Transverse colon (tissue), 4 donors: ENCODE measurements at regions of chr2 and their contacts with region 1.

Region 1: GRCh38 chr2:60581433-60582282 is 28.2 kb upstream of the BCL11A start:
- DNase-seq: peak; percentile 67
- H3K4me3 ChIP-seq: peak overlapping the region in 3 of 4 donors; percentile 24 to 47 (median 26)
- H3K27ac ChIP-seq: no peak overlapping the region
- H3K4me1 ChIP-seq: peaks cover 0 to 5% (median 0%) of the 10 kb centered on the region in 4 donors
- H3K27me3 ChIP-seq: peaks cover 20% of the 10 kb centered on the region
- CTCF ChIP-seq: peak; percentile 69 to 96 (median 90)
- EP300 ChIP-seq: no peak
- POLR2A ChIP-seq: no peak

Region 2: DNA sequence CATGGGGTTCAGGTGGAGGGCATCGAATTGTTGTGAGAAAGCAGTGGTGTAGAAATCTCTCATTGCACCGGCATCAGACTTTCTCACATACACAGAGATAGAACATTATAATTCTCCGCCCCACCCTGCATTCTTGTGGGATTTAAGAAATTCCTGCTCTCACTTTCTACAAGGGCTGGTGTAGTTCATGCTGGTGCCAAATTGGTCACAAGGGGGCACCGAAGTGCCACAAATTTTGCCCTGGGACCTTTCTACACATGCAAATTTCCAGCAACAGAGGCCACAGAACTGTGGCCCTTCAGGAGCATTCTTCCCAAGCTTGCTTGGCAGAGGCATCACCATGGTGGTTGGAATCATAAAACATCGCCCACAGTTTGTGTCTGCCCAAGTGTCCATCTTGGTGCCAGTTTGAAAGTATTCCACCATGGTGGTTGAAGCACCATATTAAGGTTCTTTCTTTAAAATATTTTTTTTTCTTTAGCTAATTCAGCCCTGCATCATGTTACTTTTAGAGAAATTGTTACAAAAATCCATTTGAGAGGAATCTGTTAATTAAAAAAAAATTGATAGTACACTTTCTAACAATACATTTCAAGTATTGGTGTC is 1819.4 kb before region 1 on chr2:
- in situ Hi-C with region 1: loop called in 2 of 4 experiments (anchors 25 kb)
- intact Hi-C with region 1: loop called (anchors 10 kb)
- DNase-seq: peak; percentile 35
- H3K4me3 ChIP-seq: no peak overlapping the region
- H3K27ac ChIP-seq: no peak overlapping the region
- H3K4me1 ChIP-seq: no peaks in the 10 kb centered on the region
- H3K27me3 ChIP-seq: no peaks in the 10 kb centered on the region
- CTCF ChIP-seq: peak in 4 of 5 experiments; percentile 22 to 43 (median 40)
- EP300 ChIP-seq: no peak
- POLR2A ChIP-seq: no peak

Region 3: DNA sequence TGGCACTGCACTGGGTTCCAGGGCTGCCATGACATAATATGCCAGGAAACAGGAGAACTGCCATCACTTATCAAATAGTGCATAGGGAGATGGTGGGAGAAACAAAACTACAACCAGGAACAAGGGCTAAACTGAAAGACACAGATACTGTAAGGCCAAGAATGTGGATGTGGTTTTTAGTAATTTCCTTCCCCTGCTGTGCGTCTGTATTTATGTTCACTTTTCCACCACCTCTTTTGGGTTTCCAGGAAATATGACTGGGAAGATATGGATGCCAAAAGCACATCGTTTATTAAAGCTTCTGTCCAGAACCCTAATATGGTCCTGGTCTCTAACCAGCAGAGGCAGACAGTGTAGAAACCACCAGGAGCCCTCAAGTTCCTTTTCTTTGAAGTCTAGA is 1580.9 kb before region 1 on chr2:
- in situ Hi-C with region 1: loop called in 1 of 4 experiments (anchors 25 kb)
- intact Hi-C with region 1: no loop called
- DNase-seq: no peak
- H3K4me3 ChIP-seq: no peak overlapping the region
- H3K27ac ChIP-seq: no peak overlapping the region
- H3K4me1 ChIP-seq: no peaks in the 10 kb centered on the region
- H3K27me3 ChIP-seq: no peaks in the 10 kb centered on the region
- CTCF ChIP-seq: no peak
- EP300 ChIP-seq: no peak
- POLR2A ChIP-seq: no peak

Region 4: DNA sequence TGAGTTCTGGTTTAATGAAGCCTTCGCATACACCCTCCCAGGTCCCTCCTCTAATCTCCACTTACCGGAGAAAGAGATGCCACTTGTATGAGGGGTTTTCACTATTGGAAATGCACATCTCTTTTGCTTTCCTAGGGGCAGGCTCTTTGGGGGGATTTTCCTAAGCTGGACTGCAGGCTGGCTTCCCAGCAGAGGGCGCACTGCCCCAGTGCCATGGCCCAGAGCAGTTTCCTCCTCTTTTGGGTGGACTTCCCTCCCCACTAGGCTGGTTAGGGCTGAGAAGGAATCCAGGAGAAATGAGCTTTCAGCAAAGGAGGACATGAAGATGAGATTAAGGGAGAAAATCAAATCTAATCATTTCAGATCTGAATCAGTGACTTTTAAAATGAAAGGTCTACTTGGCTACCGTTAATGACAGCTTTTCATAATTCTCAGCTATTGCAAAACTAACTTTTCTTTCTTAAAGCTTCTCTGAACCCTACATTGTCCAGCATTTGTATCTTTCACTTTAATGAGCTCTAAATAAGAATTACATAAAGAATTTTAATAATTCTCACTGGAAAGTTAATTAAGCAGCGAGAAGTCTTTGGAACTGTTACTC is 1556.4 kb before region 1 on chr2:
- in situ Hi-C with region 1: loop called in 2 of 4 experiments (anchors 25 kb)
- intact Hi-C with region 1: no loop called
- DNase-seq: peak; percentile 16
- H3K4me3 ChIP-seq: no peak overlapping the region
- H3K27ac ChIP-seq: no peak overlapping the region
- H3K4me1 ChIP-seq: no peaks in the 10 kb centered on the region
- H3K27me3 ChIP-seq: no peaks in the 10 kb centered on the region
- CTCF ChIP-seq: peak; percentile 39 to 60 (median 53)
- EP300 ChIP-seq: no peak
- POLR2A ChIP-seq: no peak

Region 5: GRCh38 chr2:59276033-59276432 is 1305.6 kb before region 1 on chr2:
- in situ Hi-C with region 1: loop called in 1 of 4 experiments (anchors 25 kb)
- intact Hi-C with region 1: no loop called
- DNase-seq: no peak
- H3K4me3 ChIP-seq: no peak overlapping the region
- H3K27ac ChIP-seq: no peak overlapping the region
- H3K4me1 ChIP-seq: no peaks in the 10 kb centered on the region
- H3K27me3 ChIP-seq: no peaks in the 10 kb centered on the region
- CTCF ChIP-seq: peak in 1 of 5 experiments; percentile 14
- EP300 ChIP-seq: no peak
- POLR2A ChIP-seq: no peak

Region 6: DNA sequence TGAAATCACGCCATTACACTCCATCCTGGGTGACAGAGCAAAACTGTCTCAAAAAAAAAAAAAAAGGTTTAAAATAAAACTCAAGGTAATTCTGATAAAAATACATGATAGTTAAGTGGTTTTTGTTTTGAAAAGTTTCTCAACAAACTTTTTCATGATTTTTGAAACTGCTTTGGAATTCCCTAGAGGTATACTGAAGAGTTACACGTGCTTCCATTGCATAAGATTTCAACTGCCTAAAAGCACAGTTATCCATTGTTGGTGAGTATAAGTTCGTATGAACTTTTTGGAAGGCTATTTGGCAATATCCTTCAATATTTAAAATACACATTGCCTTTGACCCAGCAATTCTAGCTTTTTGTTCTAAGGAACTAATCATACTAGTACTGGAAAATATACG is 814.3 kb after region 1 on chr2:
- in situ Hi-C with region 1: no loop called
- intact Hi-C with region 1: no loop called
- DNase-seq: no peak
- H3K4me3 ChIP-seq: no peak overlapping the region
- H3K27ac ChIP-seq: no peak overlapping the region
- H3K4me1 ChIP-seq: no peaks in the 10 kb centered on the region
- H3K27me3 ChIP-seq: no peaks in the 10 kb centered on the region
- CTCF ChIP-seq: peak in 1 of 5 experiments; percentile 21
- EP300 ChIP-seq: no peak
- POLR2A ChIP-seq: no peak